IMR-90 (cell line): ENCODE measurements at regions of chrX and their contacts with region 1.

Region 1: GRCh38 chrX:10636337-10636736 is 16.0 kb upstream of the MID1 start:
- DNase-seq: peak; percentile 68
- ATAC-seq: peak; percentile 62
- H3K4me3 ChIP-seq: no peak overlapping the region
- H3K27ac ChIP-seq: no peak overlapping the region
- H3K4me1 ChIP-seq: peaks cover 2% of the 10 kb centered on the region; the same call in 1 of the 2 replicates
- H3K27me3 ChIP-seq: no peaks in the 10 kb centered on the region
- CTCF ChIP-seq: peak; percentile 70
- POLR2A ChIP-seq: no peak
- RAD21 ChIP-seq: peak; percentile 83

Region 2: DNA sequence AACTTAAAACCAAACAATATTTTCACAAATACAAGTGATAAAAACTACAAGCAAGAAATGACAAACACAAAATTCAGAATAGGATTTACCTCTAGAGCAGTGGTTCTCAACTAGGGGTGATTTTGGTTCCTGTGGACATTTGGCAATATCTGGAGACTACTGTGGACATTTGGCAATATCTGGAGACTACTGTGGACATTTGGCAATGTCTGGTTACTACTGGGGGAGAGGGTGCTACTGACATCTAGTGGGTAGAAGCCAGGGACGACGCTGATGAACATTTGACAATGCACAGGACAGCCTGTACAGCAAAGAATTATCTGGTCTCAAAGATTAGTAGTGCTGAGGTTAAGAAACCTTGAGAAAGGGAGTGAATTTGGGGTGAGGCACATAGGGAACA is 309.8 kb before region 1 on chrX:
- CTCF ChIA-PET with region 1: interaction called, 3 read pairs
- POLR2A ChIA-PET with region 1: no interaction called
- dilution Hi-C with region 1: no loop called
- in situ Hi-C with region 1: no loop called
- intact Hi-C with region 1: loop called (anchors 2 kb)
- DNase-seq: peak; percentile 43
- ATAC-seq: peak; percentile 60
- H3K4me3 ChIP-seq: no peak overlapping the region
- H3K27ac ChIP-seq: no peak overlapping the region
- H3K4me1 ChIP-seq: peaks cover 2% of the 10 kb centered on the region; the same call in 1 of the 2 replicates
- H3K27me3 ChIP-seq: no peaks in the 10 kb centered on the region; the same call in 1 of the 2 replicates
- CTCF ChIP-seq: peak; percentile 46
- POLR2A ChIP-seq: no peak
- RAD21 ChIP-seq: peak; percentile 50

Region 3: GRCh38 chrX:10514891-10515290 is 121.4 kb before region 1 on chrX:
- CTCF ChIA-PET with region 1: no interaction called
- POLR2A ChIA-PET with region 1: no interaction called
- dilution Hi-C with region 1: no loop called
- in situ Hi-C with region 1: no loop called
- intact Hi-C with region 1: loop called (anchors 5 kb)
- DNase-seq: peak; percentile 54
- ATAC-seq: peak; percentile 50
- H3K4me3 ChIP-seq: no peak overlapping the region
- H3K27ac ChIP-seq: no peak overlapping the region
- H3K4me1 ChIP-seq: peaks cover 5% of the 10 kb centered on the region
- H3K27me3 ChIP-seq: no peaks in the 10 kb centered on the region
- CTCF ChIP-seq: no peak
- POLR2A ChIP-seq: no peak
- RAD21 ChIP-seq: no peak

Region 4: GRCh38 chrX:10537308-10537707 is 99.0 kb before region 1 on chrX:
- CTCF ChIA-PET with region 1: no interaction called
- POLR2A ChIA-PET with region 1: no interaction called
- dilution Hi-C with region 1: no loop called
- in situ Hi-C with region 1: no loop called
- intact Hi-C with region 1: no loop called
- DNase-seq: no peak
- ATAC-seq: no peak
- H3K4me3 ChIP-seq: no peak overlapping the region
- H3K27ac ChIP-seq: no peak overlapping the region
- H3K4me1 ChIP-seq: peaks cover 3% of the 10 kb centered on the region; the same call in 1 of the 2 replicates
- H3K27me3 ChIP-seq: no peaks in the 10 kb centered on the region
- CTCF ChIP-seq: no peak
- POLR2A ChIP-seq: no peak
- RAD21 ChIP-seq: no peak

Region 5: GRCh38 chrX:10615931-10616775 is 20.2 kb before region 1 on chrX:
- CTCF ChIA-PET with region 1: interaction called, 5 read pairs
- POLR2A ChIA-PET with region 1: no interaction called
- dilution Hi-C with region 1: no loop called
- in situ Hi-C with region 1: no loop called
- intact Hi-C with region 1: loop called (anchors 2 kb)
- DNase-seq: peak; percentile 58
- ATAC-seq: no peak
- H3K4me3 ChIP-seq: no peak overlapping the region
- H3K27ac ChIP-seq: peak overlapping the region; percentile 22; the same call in 1 of the 2 replicates
- H3K4me1 ChIP-seq: peaks cover 7% of the 10 kb centered on the region
- H3K27me3 ChIP-seq: no peaks in the 10 kb centered on the region
- CTCF ChIP-seq: peak; percentile 58
- POLR2A ChIP-seq: no peak
- RAD21 ChIP-seq: peak; percentile 64

Region 6: DNA sequence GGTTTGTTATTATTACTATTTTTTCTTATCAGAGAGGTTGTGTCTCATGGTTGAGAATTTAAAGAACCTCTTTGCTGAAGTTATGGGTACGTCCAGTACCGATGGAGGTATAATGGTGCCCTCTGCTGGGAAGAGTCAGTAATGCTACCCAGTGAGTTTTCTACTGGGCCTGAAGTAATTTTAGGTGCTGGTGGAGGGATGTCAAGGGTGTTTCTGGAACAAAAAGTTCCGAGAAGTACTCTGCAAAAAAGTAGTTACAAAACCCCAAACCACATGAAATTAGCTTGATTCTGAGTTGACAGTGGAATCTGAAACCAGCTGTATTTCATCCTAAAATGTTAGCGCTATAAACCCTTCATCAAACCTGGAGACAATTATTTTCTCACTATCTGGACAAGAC is 86.5 kb after region 1 on chrX:
- CTCF ChIA-PET with region 1: no interaction called
- POLR2A ChIA-PET with region 1: no interaction called
- dilution Hi-C with region 1: no loop called
- in situ Hi-C with region 1: no loop called
- intact Hi-C with region 1: loop called (anchors 1 kb)
- DNase-seq: peak; percentile 67
- ATAC-seq: peak; percentile 90
- H3K4me3 ChIP-seq: no peak overlapping the region
- H3K27ac ChIP-seq: no peak overlapping the region
- H3K4me1 ChIP-seq: 0 out of 2 replicates have a peak, but pooled peaks cover 1% of the 10 kb centered on the region
- H3K27me3 ChIP-seq: no peaks in the 10 kb centered on the region
- CTCF ChIP-seq: peak; percentile 78
- POLR2A ChIP-seq: no peak
- RAD21 ChIP-seq: peak; percentile 76

Region 7: DNA sequence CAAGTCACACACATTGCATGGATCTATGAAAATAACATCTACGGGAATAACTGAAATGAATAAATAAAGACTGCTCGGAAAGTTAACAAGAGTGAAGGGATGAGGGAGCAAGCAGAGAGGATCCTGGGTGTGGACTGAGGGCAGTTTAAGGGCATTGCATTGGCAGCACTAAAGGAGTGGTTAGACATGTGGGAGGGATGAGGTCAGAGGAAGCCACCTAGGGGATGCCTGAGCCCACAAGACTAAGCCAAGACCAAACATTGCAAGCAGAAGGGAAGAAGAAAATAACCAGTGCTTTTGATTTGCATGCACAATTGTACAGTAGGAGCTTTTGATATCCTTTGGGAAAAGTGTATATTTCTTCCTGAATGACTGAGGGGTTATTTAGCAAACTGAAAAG is 1227.8 kb after region 1 on chrX:
- CTCF ChIA-PET with region 1: no interaction called
- POLR2A ChIA-PET with region 1: no interaction called
- dilution Hi-C with region 1: no loop called
- in situ Hi-C with region 1: no loop called
- intact Hi-C with region 1: no loop called
- DNase-seq: no peak
- ATAC-seq: no peak
- H3K4me3 ChIP-seq: no peak overlapping the region
- H3K27ac ChIP-seq: no peak overlapping the region
- H3K4me1 ChIP-seq: no peaks in the 10 kb centered on the region
- H3K27me3 ChIP-seq: no peaks in the 10 kb centered on the region
- CTCF ChIP-seq: no peak
- POLR2A ChIP-seq: no peak
- RAD21 ChIP-seq: no peak